ENCODE measurements at regions of chr6 and their contacts with region 1.

Region 1: GRCh38 chr6:79056226-79056625 is 21.8 kb downstream of the PHIP start:
- H3K4me3 Mint-ChIP-seq: no peak overlapping the region
- H3K27ac Mint-ChIP-seq: no peak overlapping the region
- H3K4me1 Mint-ChIP-seq: no peaks in the 10 kb centered on the region
- H3K27me3 Mint-ChIP-seq: no peaks in the 10 kb centered on the region

Region 2: GRCh38 chr6:78483553-78484197 is 572.6 kb before region 1 on chr6:
- intact Hi-C with region 1: no loop called
- H3K4me3 Mint-ChIP-seq: no peak overlapping the region
- H3K27ac Mint-ChIP-seq: no peak overlapping the region
- H3K4me1 Mint-ChIP-seq: no peaks in the 10 kb centered on the region
- H3K27me3 Mint-ChIP-seq: no peaks in the 10 kb centered on the region

Region 3: DNA sequence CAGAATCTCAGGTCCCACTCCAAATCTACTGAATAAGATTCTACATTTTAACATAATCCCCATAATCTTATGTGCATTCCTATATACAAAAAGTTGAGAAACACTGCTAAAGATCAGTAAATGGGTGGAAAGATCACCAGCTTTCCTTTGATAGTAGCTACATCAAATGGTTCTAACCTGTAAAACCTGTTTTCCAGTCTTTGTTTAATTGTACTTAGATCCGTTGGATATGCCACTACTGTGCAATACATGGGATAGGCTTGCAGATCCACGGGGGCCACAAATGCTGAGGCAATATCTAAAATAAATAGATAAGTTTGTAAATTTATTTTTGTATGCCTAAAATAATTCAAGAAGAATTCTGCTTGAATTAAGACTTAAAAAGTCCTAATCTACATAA is 94.7 kb before region 1 on chr6:
- intact Hi-C with region 1: loop called (anchors 10 kb)
- H3K4me3 Mint-ChIP-seq: no peak overlapping the region
- H3K27ac Mint-ChIP-seq: no peak overlapping the region
- H3K4me1 Mint-ChIP-seq: peaks cover 7% of the 10 kb centered on the region
- H3K27me3 Mint-ChIP-seq: no peaks in the 10 kb centered on the region

Measured in dendritic cell treated with granulocyte-macrophage colony-stimulating factor and Interleukin-4, amounts not matched to agents 40 ng/mL and 50 ng/mL, for 4 days (primary cell).